Right lobe of liver (tissue), 6 donors: ENCODE measurements at regions of chr1 and their contacts with region 1.

Region 1: DNA sequence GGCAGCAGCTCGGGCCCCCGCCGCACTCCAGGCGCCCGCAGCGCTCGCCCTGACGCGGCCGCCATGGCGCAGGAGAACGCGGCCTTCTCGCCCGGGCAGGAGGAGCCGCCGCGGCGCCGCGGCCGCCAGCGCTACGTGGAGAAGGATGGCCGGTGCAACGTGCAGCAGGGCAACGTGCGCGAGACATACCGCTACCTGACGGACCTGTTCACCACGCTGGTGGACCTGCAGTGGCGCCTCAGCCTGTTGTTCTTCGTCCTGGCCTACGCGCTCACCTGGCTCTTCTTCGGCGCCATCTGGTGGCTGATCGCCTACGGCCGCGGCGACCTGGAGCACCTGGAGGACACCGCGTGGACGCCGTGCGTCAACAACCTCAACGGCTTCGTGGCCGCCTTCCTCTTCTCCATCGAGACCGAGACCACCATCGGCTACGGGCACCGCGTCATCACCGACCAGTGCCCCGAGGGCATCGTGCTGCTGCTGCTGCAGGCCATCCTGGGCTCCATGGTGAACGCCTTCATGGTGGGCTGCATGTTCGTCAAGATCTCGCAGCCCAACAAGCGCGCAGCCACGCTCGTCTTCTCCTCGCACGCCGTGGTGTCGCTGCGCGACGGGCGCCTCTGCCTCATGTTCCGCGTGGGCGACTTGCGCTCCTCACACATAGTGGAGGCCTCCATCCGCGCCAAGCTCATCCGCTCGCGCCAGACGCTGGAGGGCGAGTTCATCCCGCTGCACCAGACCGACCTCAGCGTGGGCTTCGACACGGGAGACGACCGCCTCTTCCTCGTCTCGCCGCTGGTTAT is 2.8 kb downstream of the KCNJ9 start:
- DNase-seq: peak; percentile 78 to 86 (median 79)
- ATAC-seq: peak; percentile 86 to 90 (median 88)
- H3K4me3 ChIP-seq: peak overlapping the region in 2 of 3 donors; percentile 23 to 42
- H3K27ac ChIP-seq: no peak overlapping the region
- H3K4me1 ChIP-seq: peaks cover 0 to 3% (median 0%) of the 10 kb centered on the region in 4 donors
- H3K27me3 ChIP-seq: no peaks in the 10 kb centered on the region
- CTCF ChIP-seq: peak; percentile 62 to 81 (median 80)
- POLR2A ChIP-seq: no peak

Region 2: DNA sequence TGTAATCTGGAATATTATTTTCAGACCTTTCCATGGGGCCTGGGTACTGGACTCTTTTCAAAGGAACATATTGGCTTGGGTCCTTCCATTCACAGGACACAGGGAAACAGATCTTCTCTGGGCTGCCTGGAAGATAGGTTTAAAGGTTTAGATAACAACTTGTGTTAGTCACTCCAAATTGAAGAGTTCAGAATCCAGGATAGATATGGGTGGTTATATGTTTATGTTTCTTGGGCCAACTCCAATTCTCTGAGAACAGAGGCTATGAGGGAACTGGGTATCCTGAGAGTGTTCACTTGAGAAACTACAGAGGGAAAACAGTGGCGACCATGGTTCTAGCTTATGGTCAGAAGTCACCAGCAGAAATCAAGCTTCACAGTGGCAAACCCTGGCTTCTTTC is 43.7 kb before region 1 on chr1:
- intact Hi-C with region 1: loop called in 1 of 2 experiments (anchors 5 kb)
- DNase-seq: no peak
- ATAC-seq: no peak
- H3K4me3 ChIP-seq: no peak overlapping the region
- H3K27ac ChIP-seq: no peak overlapping the region
- H3K4me1 ChIP-seq: peaks cover 0 to 2% (median 0%) of the 10 kb centered on the region in 4 donors
- H3K27me3 ChIP-seq: no peaks in the 10 kb centered on the region
- CTCF ChIP-seq: no peak
- POLR2A ChIP-seq: no peak